ENCODE measurements at regions of chr6 and their contacts with region 1.

Region 1: GRCh38 chr6:136719280-136720044 is 72.8 kb downstream of the MAP3K5 start:
- DNase-seq: no peak
- ATAC-seq: peak in 1 of 4 donors; percentile 15
- H3K4me3 ChIP-seq: peak overlapping the region in 1 of 12 donors; percentile 19
- H3K27ac ChIP-seq: peak overlapping the region in 3 of 12 donors; percentile 1 to 69 (median 8)
- H3K4me1 ChIP-seq: peaks cover 0 to 54% (median 25%) of the 10 kb centered on the region in 12 donors
- H3K27me3 ChIP-seq: no peaks in the 10 kb centered on the region
- CTCF ChIP-seq: no peak
- POLR2A ChIP-seq: no peak

Region 2: DNA sequence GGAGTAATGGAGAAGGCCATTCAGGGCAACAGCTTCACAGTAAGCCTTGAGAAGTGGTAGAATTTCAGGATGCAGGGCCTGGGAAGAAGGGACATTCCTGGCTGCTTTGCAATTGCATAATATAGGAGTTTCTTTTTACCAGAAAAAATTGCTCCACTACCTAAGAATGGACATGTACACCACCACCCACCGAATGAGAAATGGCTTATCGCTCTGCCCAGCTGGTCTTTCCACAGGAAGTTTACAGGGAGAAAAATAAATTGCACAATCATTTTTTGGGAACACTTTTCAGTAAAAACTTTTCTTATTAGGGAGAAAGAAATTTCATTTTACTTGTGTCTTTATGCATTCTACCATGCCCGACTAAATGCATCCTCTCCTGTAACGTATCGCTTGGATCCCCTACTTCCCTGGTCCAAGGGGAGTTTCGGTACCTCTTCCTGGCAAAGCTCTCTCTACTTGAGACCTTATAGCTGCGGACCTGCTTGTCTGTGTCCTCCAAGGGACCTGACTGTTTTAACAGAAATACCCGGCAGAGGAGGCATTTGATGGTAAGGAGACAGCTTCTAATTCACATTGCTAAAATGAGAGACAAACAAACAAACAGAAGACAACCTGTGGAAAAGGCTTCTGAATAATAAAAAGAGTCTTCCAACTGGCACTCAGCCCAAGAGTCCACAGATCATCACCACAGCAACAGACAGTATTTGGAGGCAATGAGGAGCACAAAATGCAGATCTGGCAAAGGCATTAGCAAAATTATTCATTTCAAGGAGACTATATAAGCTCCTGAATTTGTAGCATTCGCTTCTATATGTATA is 18.6 kb after region 1 on chr6:
- intact Hi-C with region 1: loop called in 1 of 10 experiments (anchors 2 kb)
- DNase-seq: peak in 1 of 5 donors; percentile 42
- ATAC-seq: peak; percentile 33 to 84 (median 72)
- H3K4me3 ChIP-seq: peak overlapping the region in 2 of 12 donors; percentile 17 to 26
- H3K27ac ChIP-seq: peak overlapping the region; percentile 0 to 69 (median 54)
- H3K4me1 ChIP-seq: peaks cover 0 to 47% (median 24%) of the 10 kb centered on the region in 12 donors
- H3K27me3 ChIP-seq: no peaks in the 10 kb centered on the region
- CTCF ChIP-seq: no peak
- POLR2A ChIP-seq: no peak

Region 3: GRCh38 chr6:136761227-136761922 is 41.9 kb after region 1 on chr6:
- intact Hi-C with region 1: loop called in 1 of 10 experiments (anchors 5 kb)
- DNase-seq: peak in 2 of 5 donors; percentile 42 to 47
- ATAC-seq: peak; percentile 40 to 71 (median 59)
- H3K4me3 ChIP-seq: peak overlapping the region in 9 of 12 donors; percentile 2 to 42 (median 22)
- H3K27ac ChIP-seq: peak overlapping the region; percentile 70 to 90 (median 82)
- H3K4me1 ChIP-seq: peaks cover 3 to 85% (median 66%) of the 10 kb centered on the region in 12 donors
- H3K27me3 ChIP-seq: no peaks in the 10 kb centered on the region
- CTCF ChIP-seq: no peak
- POLR2A ChIP-seq: no peak

Region 4: DNA sequence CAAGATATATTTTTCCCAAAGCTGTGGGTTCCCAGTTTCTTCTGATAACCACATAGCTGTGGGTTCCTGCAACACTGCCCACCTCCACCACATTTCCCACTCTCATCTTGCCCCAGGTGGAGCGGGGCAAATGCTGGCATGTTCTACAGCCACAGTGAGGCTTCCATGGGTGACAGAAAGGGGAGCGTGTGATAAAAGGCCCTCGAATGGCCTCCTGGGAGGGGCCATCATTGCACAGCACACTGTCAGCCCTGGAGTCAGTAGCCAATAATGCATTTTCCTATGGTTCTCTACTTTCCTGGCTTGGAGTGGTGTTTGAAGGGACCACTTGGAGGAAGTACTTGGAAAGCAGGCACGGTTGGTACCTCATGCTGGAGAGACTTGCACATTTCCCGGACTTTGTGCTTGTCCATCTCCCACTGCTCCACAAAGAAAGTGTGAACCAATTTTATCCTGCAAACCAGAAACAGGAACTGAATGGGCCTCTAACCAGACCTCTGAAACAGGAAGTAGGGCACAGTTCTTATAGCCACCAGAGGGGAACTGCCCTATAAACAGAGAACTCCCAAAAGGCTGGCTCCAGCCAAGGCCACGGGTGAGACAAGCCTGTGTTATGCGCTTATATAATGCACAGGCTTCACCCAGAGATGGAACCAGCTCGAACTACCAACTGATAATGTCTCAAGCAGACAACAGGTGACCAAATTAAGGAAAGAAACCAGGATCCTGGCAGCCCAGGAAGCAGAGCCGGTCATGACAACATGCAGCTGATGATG is 64.2 kb after region 1 on chr6:
- intact Hi-C with region 1: loop called in 2 of 10 experiments (anchors 10 kb)
- DNase-seq: peak in 4 of 5 donors; percentile 35 to 51 (median 42)
- ATAC-seq: peak in 3 of 4 donors; percentile 49 to 78 (median 71)
- H3K4me3 ChIP-seq: peak overlapping the region in 7 of 12 donors; percentile 4 to 50 (median 21)
- H3K27ac ChIP-seq: peak overlapping the region in 10 of 12 donors; percentile 1 to 84 (median 16)
- H3K4me1 ChIP-seq: peaks cover 2 to 83% (median 63%) of the 10 kb centered on the region in 12 donors
- H3K27me3 ChIP-seq: no peaks in the 10 kb centered on the region
- CTCF ChIP-seq: no peak
- POLR2A ChIP-seq: no peak

Measured in heart left ventricle (tissue), 16 donors.